ENCODE measurements at regions of chr7 and their contacts with region 1.

Region 1: GRCh38 chr7:95684037-95684436 is 87.7 kb upstream of the PDK4 start:
- DNase-seq: peak; percentile 21
- ATAC-seq: no peak
- H3K4me3 ChIP-seq: no peak overlapping the region
- H3K27ac ChIP-seq: no peak overlapping the region
- H3K4me1 ChIP-seq: no peaks in the 10 kb centered on the region
- H3K27me3 ChIP-seq: no peaks in the 10 kb centered on the region
- CTCF ChIP-seq: 0 out of 2 replicates have a peak, but pooled peaks have one; percentile 32
- EP300 ChIP-seq: no peak
- POLR2A ChIP-seq: no peak
- RAD21 ChIP-seq: no peak

Region 2: DNA sequence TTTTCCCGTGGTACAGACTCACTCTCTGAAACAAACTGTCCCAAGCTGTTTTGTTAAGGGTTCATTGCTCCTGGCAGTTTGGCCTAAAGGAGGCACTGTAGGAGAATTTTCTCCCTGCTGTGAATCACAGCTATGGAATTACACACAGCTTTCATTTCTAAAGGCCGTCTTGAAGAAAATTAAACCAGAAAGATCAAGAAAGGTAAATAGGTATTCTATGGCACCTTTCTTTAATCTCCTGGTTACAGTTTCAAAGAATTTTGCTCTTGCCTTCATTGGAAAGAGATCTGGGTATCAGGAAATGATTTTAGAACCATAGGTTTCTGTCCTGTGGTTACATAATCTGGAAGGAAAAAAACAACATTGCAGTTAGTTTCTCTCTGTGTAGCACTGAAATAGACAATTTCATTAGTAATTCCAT is 138.9 kb before region 1 on chr7:
- CTCF ChIA-PET with region 1: interaction called, 12 read pairs
- POLR2A ChIA-PET with region 1: no interaction called
- in situ Hi-C with region 1: no loop called
- intact Hi-C with region 1: loop called (anchors 1 kb)
- DNase-seq: peak; percentile 24
- ATAC-seq: peak; percentile 85
- H3K4me3 ChIP-seq: no peak overlapping the region
- H3K27ac ChIP-seq: no peak overlapping the region
- H3K4me1 ChIP-seq: peaks cover 5% of the 10 kb centered on the region; the same call in 1 of the 2 replicates
- H3K27me3 ChIP-seq: no peaks in the 10 kb centered on the region
- CTCF ChIP-seq: peak; percentile 67
- EP300 ChIP-seq: no peak
- POLR2A ChIP-seq: no peak
- RAD21 ChIP-seq: peak; percentile 29; the same call in 1 of the 2 replicates